CD8-positive, alpha-beta memory T cell (primary cell): ENCODE measurements at regions of chr19 and their contacts with region 1.

Region 1: GRCh38 chr19:8575467-8575997 is 1.7 kb downstream of the MYO1F start:
- DNase-seq: peak; percentile 48 to 78 (median 55)
- H3K4me3 ChIP-seq: peak overlapping the region; percentile 91
- H3K4me3 Mint-ChIP-seq: peak overlapping the region; percentile 93 to 100 (median 97)
- H3K27ac ChIP-seq: peak overlapping the region; percentile 59
- H3K27ac Mint-ChIP-seq: peak overlapping the region; percentile 87 to 99 (median 94)
- H3K4me1 ChIP-seq: peaks cover 88% of the 10 kb centered on the region
- H3K4me1 Mint-ChIP-seq: peaks cover 61 to 92% (median 63%) of the 10 kb centered on the region in 3 donors
- H3K27me3 ChIP-seq: no peaks in the 10 kb centered on the region
- H3K27me3 Mint-ChIP-seq: peaks cover 0 to 3% of the 10 kb centered on the region in 2 donors

Region 2: DNA sequence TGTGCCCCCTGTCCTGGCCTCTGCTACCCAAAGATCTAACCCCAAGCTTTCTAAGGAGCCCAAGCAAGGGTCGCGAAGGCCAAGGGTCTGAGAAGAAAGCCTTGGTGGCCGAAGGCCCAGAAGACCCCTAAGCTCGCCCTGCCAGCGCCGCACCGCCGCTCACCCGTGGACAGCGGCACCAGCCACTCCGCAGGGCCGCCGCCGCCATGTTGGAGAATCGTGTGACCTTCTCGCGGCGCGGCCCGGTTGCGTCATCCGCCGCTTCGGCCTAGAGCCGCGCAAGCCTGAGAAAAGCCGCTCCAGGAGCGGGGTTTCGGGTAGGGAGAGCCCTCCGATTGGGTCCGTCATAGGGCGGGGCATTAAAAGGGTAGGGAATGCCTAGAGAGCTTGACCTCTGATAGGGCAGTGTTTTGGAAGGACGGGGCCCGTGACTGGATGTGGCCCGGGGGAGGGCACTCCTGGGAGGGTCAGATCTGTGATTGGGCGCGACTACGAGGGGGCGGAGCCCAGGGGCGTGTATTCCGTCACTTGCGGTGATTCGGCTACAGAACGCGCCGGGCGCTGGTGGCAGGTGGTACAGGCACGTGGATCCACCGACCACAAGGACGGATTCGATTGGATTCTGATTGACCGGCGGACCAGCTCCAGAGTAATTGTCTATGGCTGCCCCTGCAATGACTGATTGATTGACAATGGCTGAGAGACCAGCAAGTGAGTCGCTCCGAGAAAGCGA is 631.9 kb before region 1 on chr19 and contains the start of gene TIMM44:
- CTCF ChIA-PET with region 1: no interaction called
- POLR2A ChIA-PET with region 1: no interaction called
- DNase-seq: peak; percentile 98 to 99 (median 99)
- H3K4me3 ChIP-seq: peak within 1 kb of the TSS; percentile 100
- H3K4me3 Mint-ChIP-seq: peak within 1 kb of the TSS; percentile 87 to 96 (median 91)
- H3K27ac ChIP-seq: peak within 1 kb of the TSS; percentile 98
- H3K27ac Mint-ChIP-seq: peak within 1 kb of the TSS; percentile 88 to 99 (median 96)
- H3K4me1 ChIP-seq: peaks cover 13% of the 10 kb centered on the region
- H3K4me1 Mint-ChIP-seq: peaks cover 23 to 45% (median 29%) of the 10 kb centered on the region in 3 donors
- H3K27me3 ChIP-seq: no peaks in the 10 kb centered on the region
- H3K27me3 Mint-ChIP-seq: peaks cover 0 to 2% of the 10 kb centered on the region in 2 donors
- total RNA-seq, gene TIMM44: 105 to 107 TPM

Region 3: GRCh38 chr19:8585894-8586750 is 10.6 kb after region 1 on chr19:
- CTCF ChIA-PET with region 1: interaction called, 191 read pairs
- POLR2A ChIA-PET with region 1: interaction called, 4 read pairs
- DNase-seq: peak in 3 of 5 donors; percentile 59 to 80 (median 67)
- H3K4me3 ChIP-seq: no peak overlapping the region
- H3K4me3 Mint-ChIP-seq: no peak overlapping the region
- H3K27ac ChIP-seq: no peak overlapping the region
- H3K27ac Mint-ChIP-seq: no peak overlapping the region
- H3K4me1 ChIP-seq: no peaks in the 10 kb centered on the region
- H3K4me1 Mint-ChIP-seq: peaks cover under 1 to 5% (median 2%) of the 10 kb centered on the region in 3 donors
- H3K27me3 ChIP-seq: no peaks in the 10 kb centered on the region
- H3K27me3 Mint-ChIP-seq: no peaks in the 10 kb centered on the region

Region 4: GRCh38 chr19:8680676-8681344 is 105.3 kb after region 1 on chr19:
- CTCF ChIA-PET with region 1: no interaction called
- POLR2A ChIA-PET with region 1: no interaction called
- DNase-seq: no peak
- H3K4me3 ChIP-seq: no peak overlapping the region
- H3K4me3 Mint-ChIP-seq: no peak overlapping the region
- H3K27ac ChIP-seq: no peak overlapping the region
- H3K27ac Mint-ChIP-seq: peak overlapping the region in 3 of 8 donors; percentile 6 to 59 (median 52)
- H3K4me1 ChIP-seq: no peaks in the 10 kb centered on the region
- H3K4me1 Mint-ChIP-seq: peaks cover 9 to 19% (median 15%) of the 10 kb centered on the region in 3 donors
- H3K27me3 ChIP-seq: no peaks in the 10 kb centered on the region
- H3K27me3 Mint-ChIP-seq: peaks cover 2 to 5% of the 10 kb centered on the region in 2 donors